K562 (cell line): ENCODE measurements at regions of chr15 and their contacts with region 1.

Region 1: GRCh38 chr15:85504749-85505676 is 124.6 kb downstream of the AKAP13 start:
- DNase-seq: peak; percentile 12 to 56 (median 18)
- ATAC-seq: peak; percentile 66; the same call in 2 of the 3 replicates
- H3K4me3 ChIP-seq: no peak overlapping the region
- H3K27ac ChIP-seq: no peak overlapping the region
- H3K4me1 ChIP-seq: no peaks in the 10 kb centered on the region
- H3K27me3 ChIP-seq: no peaks in the 10 kb centered on the region
- CTCF ChIP-seq: peak in 2 of 3 experiments; percentile 35 to 62; a peak in 4 of 6 replicates
- EP300 ChIP-seq: no peak
- POLR2A ChIP-seq: no peak
- RAD21 ChIP-seq: peak; percentile 39 to 67

Region 2: DNA sequence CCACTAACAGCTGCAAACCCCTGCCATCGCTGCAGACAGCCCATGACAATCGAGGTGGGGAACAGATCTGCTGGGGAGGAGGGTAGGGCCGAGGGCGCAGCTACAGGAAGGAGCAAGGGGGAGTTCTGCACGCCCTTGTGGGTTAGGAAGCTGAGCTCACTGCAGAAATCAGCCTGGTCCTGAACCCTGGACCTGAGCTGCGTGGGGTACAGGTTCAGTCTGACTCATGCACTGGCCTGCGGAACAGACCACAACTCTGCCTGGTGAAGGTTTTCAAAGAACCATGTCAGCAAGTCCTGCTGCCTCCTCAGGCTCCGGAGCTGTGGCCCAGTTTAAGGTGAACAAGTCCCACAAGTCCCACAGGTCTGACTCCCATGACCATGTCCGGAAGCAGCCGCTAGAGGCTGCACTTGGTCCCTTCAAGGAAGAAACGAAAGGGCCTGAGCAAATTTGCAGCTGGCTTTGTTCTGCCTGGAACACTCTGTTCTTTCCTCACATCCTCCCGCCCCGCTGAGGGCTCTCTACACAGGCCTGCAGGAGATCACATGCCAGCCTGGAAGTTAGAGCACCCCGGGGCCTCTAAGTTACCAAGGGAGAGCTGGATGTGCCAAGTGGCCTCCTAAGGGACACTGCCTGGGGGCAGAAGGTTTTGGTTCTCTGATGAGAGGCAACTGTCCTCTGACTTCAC is 174.0 kb before region 1 on chr15:
- CTCF ChIA-PET with region 1: interaction called, 3 read pairs
- POLR2A ChIA-PET with region 1: no interaction called
- in situ Hi-C with region 1: no loop called
- intact Hi-C with region 1: loop called (anchors 5 kb)
- DNase-seq: peak; percentile 38 to 59 (median 40)
- ATAC-seq: peak; percentile 97
- H3K4me3 ChIP-seq: no peak overlapping the region
- H3K27ac ChIP-seq: no peak overlapping the region
- H3K4me1 ChIP-seq: no peaks in the 10 kb centered on the region; a peak in 1 of 5 replicates
- H3K27me3 ChIP-seq: peaks cover 14 to 33% of the 10 kb centered on the region in 2 experiments; a peak in 3 of 5 replicates
- CTCF ChIP-seq: peak; percentile 70 to 77 (median 74)
- EP300 ChIP-seq: no peak
- POLR2A ChIP-seq: no peak
- RAD21 ChIP-seq: peak in 1 of 2 experiments; percentile 60; a peak in 3 of 4 replicates

Region 3: GRCh38 chr15:85555875-85556617 is 51.0 kb after region 1 on chr15:
- CTCF ChIA-PET with region 1: no interaction called
- POLR2A ChIA-PET with region 1: no interaction called
- in situ Hi-C with region 1: no loop called
- intact Hi-C with region 1: no loop called
- DNase-seq: no peak
- ATAC-seq: no peak
- H3K4me3 ChIP-seq: no peak overlapping the region
- H3K27ac ChIP-seq: no peak overlapping the region
- H3K4me1 ChIP-seq: no peaks in the 10 kb centered on the region
- H3K27me3 ChIP-seq: peaks cover 0 to 4% of the 10 kb centered on the region in 2 experiments; a peak in 1 of 5 replicates
- CTCF ChIP-seq: no peak
- EP300 ChIP-seq: no peak
- POLR2A ChIP-seq: no peak
- RAD21 ChIP-seq: no peak